CD8-positive, alpha-beta memory T cell (primary cell): ENCODE measurements at regions of chr1 and their contacts with region 1.

Region 1: DNA sequence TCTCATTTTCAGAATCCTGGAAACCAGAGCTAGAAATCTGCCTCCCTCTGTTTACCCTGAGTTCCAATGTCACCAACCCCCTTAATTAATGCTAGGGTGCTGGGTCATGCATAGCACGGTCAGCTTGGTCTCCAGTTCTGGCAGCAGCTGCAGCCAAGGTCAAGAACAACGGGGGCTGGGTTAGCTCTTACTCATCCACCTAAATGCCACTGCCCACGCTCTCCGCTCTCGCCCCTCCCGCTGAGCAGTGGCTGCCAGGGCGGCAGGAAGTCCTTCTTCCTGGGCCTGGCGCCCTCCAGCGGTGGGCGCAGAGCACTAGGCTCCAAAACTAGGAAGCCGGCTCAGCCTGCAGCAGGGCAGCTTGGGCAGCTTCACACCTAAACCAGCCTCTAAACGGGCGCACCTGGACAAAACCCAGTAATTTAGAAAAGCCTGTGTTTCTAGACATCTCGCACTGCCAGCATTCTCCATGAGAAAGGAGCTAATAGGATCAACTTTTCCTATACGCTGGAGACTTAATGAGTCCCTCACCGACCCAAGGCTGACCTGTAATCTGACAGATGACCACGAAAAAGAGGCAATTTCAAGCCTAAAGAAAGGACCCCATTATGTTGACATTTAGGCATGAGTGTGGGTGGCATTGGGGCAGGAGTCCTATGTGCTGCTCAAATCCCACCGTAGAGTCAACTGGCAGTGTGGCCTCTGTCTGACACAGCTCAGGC is 78.3 kb upstream of the LRRN2 start:
- DNase-seq: peak; percentile 14 to 66 (median 51)
- H3K4me3 ChIP-seq: peak overlapping the region; percentile 10
- H3K4me3 Mint-ChIP-seq: peak overlapping the region in 5 of 7 donors; percentile 3 to 30 (median 8)
- H3K27ac ChIP-seq: no peak overlapping the region
- H3K27ac Mint-ChIP-seq: no peak overlapping the region
- H3K4me1 ChIP-seq: peaks cover 9% of the 10 kb centered on the region
- H3K4me1 Mint-ChIP-seq: peaks cover 2 to 8% (median 7%) of the 10 kb centered on the region in 3 donors
- H3K27me3 ChIP-seq: peaks cover 6% of the 10 kb centered on the region
- H3K27me3 Mint-ChIP-seq: peaks cover 33 to 57% of the 10 kb centered on the region in 2 donors

Region 2: GRCh38 chr1:204565617-204566582 is 198.0 kb before region 1 on chr1:
- CTCF ChIA-PET with region 1: interaction called, 19 read pairs
- POLR2A ChIA-PET with region 1: no interaction called
- DNase-seq: peak; percentile 19 to 71 (median 59)
- H3K4me3 ChIP-seq: no peak overlapping the region
- H3K4me3 Mint-ChIP-seq: peak overlapping the region in 2 of 7 donors; percentile 18 to 47
- H3K27ac ChIP-seq: no peak overlapping the region
- H3K27ac Mint-ChIP-seq: peak overlapping the region; percentile 33 to 92 (median 79)
- H3K4me1 ChIP-seq: peaks cover 34% of the 10 kb centered on the region
- H3K4me1 Mint-ChIP-seq: peaks cover 29 to 44% (median 36%) of the 10 kb centered on the region in 3 donors
- H3K27me3 ChIP-seq: no peaks in the 10 kb centered on the region
- H3K27me3 Mint-ChIP-seq: no peaks in the 10 kb centered on the region

Region 3: GRCh38 chr1:204782118-204782700 is 18.3 kb after region 1 on chr1:
- CTCF ChIA-PET with region 1: no interaction called
- POLR2A ChIA-PET with region 1: no interaction called
- DNase-seq: no peak
- H3K4me3 ChIP-seq: no peak overlapping the region
- H3K4me3 Mint-ChIP-seq: no peak overlapping the region
- H3K27ac ChIP-seq: no peak overlapping the region
- H3K27ac Mint-ChIP-seq: no peak overlapping the region
- H3K4me1 ChIP-seq: no peaks in the 10 kb centered on the region
- H3K4me1 Mint-ChIP-seq: no peaks in the 10 kb centered on the region
- H3K27me3 ChIP-seq: no peaks in the 10 kb centered on the region
- H3K27me3 Mint-ChIP-seq: peaks cover 9 to 40% of the 10 kb centered on the region in 2 donors